Tibial artery (tissue), 4 donors: ENCODE measurements at regions of chr19 and their contacts with region 1.

Region 1: DNA sequence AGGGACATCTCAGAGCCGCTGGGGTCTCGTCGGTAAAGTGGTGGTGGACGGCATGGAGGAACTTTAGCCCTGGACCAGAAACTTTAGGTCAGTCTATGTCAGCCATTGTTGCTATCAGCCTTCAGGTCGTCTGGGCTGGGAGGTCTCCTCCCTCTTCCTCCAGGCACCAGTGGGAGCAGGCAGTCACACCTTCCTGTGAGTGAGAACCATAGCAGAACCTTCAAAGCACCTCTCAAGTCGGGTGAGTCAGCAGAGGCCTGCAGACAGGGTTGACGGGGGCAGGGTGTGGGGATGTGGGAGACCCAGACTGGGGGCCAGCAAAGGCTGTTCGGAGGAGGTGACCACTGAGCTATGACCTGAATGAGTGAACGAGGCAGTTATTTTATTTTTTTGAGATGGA is 15.4 kb upstream of the SBNO2 start:
- DNase-seq: no peak
- H3K4me3 ChIP-seq: no peak overlapping the region
- H3K27ac ChIP-seq: no peak overlapping the region
- H3K4me1 ChIP-seq: peaks cover 0 to 4% (median 0%) of the 10 kb centered on the region in 4 donors
- H3K27me3 ChIP-seq: no peaks in the 10 kb centered on the region
- CTCF ChIP-seq: no peak

Region 2: GRCh38 chr19:1082172-1082927 is 107.1 kb before region 1 on chr19:
- intact Hi-C with region 1: no loop called
- DNase-seq: no peak
- H3K4me3 ChIP-seq: no peak overlapping the region
- H3K27ac ChIP-seq: no peak overlapping the region
- H3K4me1 ChIP-seq: peaks cover 0 to 21% (median 5%) of the 10 kb centered on the region in 4 donors
- H3K27me3 ChIP-seq: peaks cover 0 to 19% of the 10 kb centered on the region in 2 donors
- CTCF ChIP-seq: no peak

Region 3: DNA sequence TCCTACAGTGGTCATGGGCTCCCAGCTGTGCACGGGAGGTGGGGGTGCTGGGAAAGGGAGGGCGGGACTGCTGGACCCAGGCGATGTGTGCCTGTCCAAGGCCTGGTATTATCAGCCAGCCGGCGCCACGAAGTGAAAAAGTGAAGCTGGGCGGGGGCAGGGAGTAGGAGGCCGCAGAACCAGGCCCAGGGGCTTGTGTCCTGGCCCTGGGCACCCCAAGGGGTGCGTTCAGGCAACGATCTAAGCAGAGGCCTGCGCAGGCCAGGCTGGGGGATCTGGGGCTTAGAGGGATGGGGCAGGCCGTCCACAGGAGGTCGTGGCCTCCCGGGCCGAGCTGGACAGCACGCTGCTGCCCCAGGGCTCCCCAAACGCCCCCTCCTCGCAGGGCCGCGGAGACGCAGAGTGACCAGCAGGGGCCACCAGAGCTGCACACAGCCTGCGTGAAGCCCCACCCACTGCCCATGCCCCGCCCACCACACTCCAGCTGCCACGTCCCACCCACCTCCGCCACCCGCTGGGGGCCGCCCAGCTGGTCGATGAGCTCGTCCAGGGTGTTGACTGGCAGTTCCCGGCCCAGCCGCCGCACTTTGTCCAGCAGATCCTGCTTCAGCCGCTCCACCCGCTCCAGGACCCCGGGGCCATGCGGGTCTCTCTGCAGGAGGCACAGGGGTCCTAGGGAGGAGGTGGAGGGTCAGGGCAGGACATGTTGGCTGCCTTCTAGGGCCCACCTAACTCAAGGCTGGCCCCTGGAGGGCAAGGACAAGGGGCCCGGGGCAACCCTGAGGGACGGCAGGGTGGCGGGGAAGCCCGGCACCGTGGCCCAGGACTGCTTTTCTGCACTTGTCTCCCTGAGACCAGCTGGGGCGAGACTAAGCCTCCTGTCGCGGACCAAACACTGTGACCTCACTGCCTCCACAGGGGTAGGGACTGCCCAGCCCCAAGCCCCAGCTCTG is 76.1 kb before region 1 on chr19:
- intact Hi-C with region 1: loop called (anchors 5 kb)
- DNase-seq: peak; percentile 97 to 98
- H3K4me3 ChIP-seq: no peak overlapping the region
- H3K27ac ChIP-seq: peak overlapping the region; percentile 76 to 84
- H3K4me1 ChIP-seq: peaks cover 0 to 27% (median 18%) of the 10 kb centered on the region in 4 donors
- H3K27me3 ChIP-seq: no peaks in the 10 kb centered on the region
- CTCF ChIP-seq: peak; percentile 94 to 96

Region 4: DNA sequence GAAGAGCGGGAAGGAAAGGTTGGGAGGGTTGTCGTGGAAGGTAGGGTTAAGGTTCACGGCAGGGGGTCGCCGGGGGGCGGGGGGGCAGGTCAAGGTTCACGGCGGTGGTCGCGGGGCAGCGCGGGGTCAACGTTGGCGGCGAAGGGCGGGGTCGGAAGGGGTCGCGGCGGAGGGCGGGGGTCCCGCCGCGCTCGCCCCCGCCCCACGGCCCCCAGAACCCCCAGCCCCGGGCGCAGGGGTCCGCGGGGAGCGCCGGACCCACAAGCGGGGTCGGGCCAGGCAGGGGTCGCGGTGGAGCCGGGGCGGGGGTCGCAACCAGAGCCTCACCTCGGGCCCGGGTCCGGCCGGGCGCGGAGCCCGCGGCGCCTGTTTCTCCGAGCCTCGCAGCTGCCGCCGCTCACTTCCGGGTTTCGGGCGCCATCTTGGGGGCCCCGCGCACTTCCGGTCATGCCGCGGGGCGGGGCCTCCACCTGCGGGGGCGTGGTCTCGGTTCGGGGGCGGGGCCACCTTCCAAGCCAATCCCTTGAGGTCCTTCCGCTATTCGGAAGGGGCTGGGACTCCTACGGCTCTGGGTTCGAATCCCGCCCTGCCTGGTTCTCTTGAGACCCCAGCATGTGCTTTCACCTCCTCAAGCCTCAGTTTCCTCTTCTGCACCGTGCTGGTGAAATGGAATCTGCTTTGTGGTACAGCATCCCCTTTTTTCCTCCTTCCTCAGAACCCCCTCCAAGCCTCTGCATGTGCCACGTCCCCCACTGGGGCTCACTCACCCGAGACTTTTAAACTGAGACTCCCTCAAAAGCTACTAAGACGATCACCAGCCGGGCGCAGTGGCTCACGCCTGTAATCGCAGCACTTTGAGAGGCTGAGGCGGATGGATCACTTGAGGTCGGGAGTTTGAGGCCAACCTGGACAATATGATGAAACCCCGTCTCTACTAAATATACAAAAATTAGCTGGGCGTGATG is 15.3 kb before region 1 on chr19 and contains the start of gene SBNO2:
- intact Hi-C with region 1: no loop called
- DNase-seq: peak; percentile 84 to 91
- H3K4me3 ChIP-seq: peak within 1 kb of the TSS; percentile 70 to 79
- H3K27ac ChIP-seq: peak within 1 kb of the TSS; percentile 92
- H3K4me1 ChIP-seq: peaks cover 0 to 60% (median 27%) of the 10 kb centered on the region in 4 donors
- H3K27me3 ChIP-seq: no peaks in the 10 kb centered on the region
- CTCF ChIP-seq: no peak

Region 5: DNA sequence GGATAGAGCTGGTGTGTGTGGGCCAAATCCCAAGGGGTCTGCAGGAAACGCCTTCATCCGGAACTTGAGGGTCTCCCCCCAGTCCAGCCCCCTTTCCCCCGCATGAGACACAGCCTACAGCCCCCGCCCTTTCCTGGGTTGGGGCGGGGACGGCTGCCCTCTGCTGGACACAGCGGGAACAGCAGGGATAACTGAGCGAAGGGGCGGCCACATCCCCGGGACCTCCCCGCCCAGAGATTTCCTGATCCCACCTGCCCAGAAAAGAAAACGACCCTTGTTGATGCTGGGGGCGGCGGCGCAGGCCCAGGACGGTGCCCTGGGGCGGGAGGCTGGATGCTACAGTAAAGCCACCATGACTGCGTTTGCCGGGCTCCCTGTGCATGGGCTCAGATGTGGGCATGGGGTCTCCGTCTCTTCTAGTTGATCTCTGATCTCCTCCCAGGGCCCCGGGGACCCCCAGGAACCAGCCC is 578.1 kb after region 1 on chr19:
- intact Hi-C with region 1: no loop called
- DNase-seq: no peak
- H3K4me3 ChIP-seq: no peak overlapping the region
- H3K27ac ChIP-seq: no peak overlapping the region
- H3K4me1 ChIP-seq: no peaks in the 10 kb centered on the region
- H3K27me3 ChIP-seq: peaks cover 0 to 96% of the 10 kb centered on the region in 2 donors
- CTCF ChIP-seq: peak; percentile 85 to 96